HCT116 (cell line): ENCODE measurements at regions of chr10 and their contacts with region 1.

Region 1: GRCh38 chr10:95445837-95446486 is 115.2 kb downstream of the SORBS1 start:
- DNase-seq: peak; percentile 80
- ATAC-seq: peak; percentile 90
- H3K4me3 ChIP-seq: 0 out of 4 replicates have a peak overlapping the region, but pooled peaks of 1 of the 2 experiments have one; percentile 9
- H3K27ac ChIP-seq: peak overlapping the region; percentile 36; the same call in 1 of the 2 replicates
- H3K4me1 ChIP-seq: peaks cover 19 to 25% of the 10 kb centered on the region in 2 experiments
- H3K27me3 ChIP-seq: no peaks in the 10 kb centered on the region
- CTCF ChIP-seq: peak; percentile 62 to 90 (median 86); a peak in 5 of 6 replicates
- POLR2A ChIP-seq: no peak
- RAD21 ChIP-seq: peak; percentile 56

Region 2: GRCh38 chr10:95430231-95430951 is 15.6 kb before region 1 on chr10:
- CTCF ChIA-PET with region 1: interaction called, 49 read pairs
- POLR2A ChIA-PET with region 1: no interaction called
- RAD21 ChIA-PET with region 1: interaction called, 3 to 4 read pairs
- intact Hi-C with region 1: no loop called
- DNase-seq: peak; percentile 23
- ATAC-seq: peak; percentile 97
- H3K4me3 ChIP-seq: peak overlapping the region in 1 of 2 experiments; percentile 24; a peak in 1 of 4 replicates
- H3K27ac ChIP-seq: no peak overlapping the region
- H3K4me1 ChIP-seq: peaks cover 0 to 5% of the 10 kb centered on the region in 2 experiments; a peak in 1 of 4 replicates
- H3K27me3 ChIP-seq: no peaks in the 10 kb centered on the region
- CTCF ChIP-seq: peak; percentile 94 to 96 (median 94)
- POLR2A ChIP-seq: no peak
- RAD21 ChIP-seq: peak; percentile 96

Region 3: GRCh38 chr10:95467162-95467599 is 21.2 kb after region 1 on chr10:
- CTCF ChIA-PET with region 1: interaction called, 14 read pairs
- POLR2A ChIA-PET with region 1: no interaction called
- RAD21 ChIA-PET with region 1: no interaction called
- intact Hi-C with region 1: no loop called
- DNase-seq: peak; percentile 37
- ATAC-seq: peak; percentile 97
- H3K4me3 ChIP-seq: no peak overlapping the region
- H3K27ac ChIP-seq: no peak overlapping the region
- H3K4me1 ChIP-seq: peaks cover 13 to 14% of the 10 kb centered on the region in 2 experiments; a peak in 3 of 4 replicates
- H3K27me3 ChIP-seq: no peaks in the 10 kb centered on the region
- CTCF ChIP-seq: peak in 2 of 3 experiments; percentile 15 to 17; a peak in 1 of 6 replicates
- POLR2A ChIP-seq: no peak
- RAD21 ChIP-seq: peak; percentile 32; the same call in 1 of the 2 replicates

Region 4: DNA sequence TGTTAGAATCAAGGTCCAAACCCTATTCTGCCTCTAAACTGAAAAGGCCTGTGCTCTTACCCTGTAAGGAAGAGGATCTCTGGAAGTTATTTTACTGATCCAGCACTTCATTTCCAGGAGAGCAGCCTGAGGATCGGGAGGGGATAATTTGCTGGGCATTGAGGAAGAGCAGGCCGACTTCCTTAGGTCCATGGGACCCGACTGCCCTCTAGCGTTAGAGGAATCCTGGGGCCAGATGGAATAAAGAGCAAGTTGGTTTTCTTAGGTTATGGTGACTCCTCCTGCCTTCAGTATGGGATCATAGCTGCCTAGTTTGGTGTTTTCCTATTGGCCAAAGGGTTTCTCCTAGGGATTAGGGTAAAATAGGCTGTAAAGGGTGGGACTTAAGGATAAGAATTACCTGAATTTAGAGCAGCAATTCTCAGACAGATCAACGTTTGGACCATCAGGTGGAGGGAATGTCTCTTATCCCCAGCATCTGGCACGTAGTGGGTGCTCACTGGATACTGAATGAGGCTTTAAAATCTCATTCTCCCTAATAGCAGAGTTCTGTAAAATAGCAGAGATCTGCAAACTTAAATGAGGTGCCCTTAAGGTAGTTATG is 155.3 kb after region 1 on chr10:
- CTCF ChIA-PET with region 1: interaction called, 9 read pairs
- POLR2A ChIA-PET with region 1: no interaction called
- RAD21 ChIA-PET with region 1: interaction called in 1 of 2 experiments, 3 read pairs
- intact Hi-C with region 1: loop called (anchors 5 kb)
- DNase-seq: peak; percentile 90
- ATAC-seq: peak; percentile 97
- H3K4me3 ChIP-seq: no peak overlapping the region
- H3K27ac ChIP-seq: no peak overlapping the region
- H3K4me1 ChIP-seq: no peaks in the 10 kb centered on the region
- H3K27me3 ChIP-seq: no peaks in the 10 kb centered on the region
- CTCF ChIP-seq: peak; percentile 96 to 99 (median 98)
- POLR2A ChIP-seq: no peak
- RAD21 ChIP-seq: peak; percentile 99